ENCODE measurements at regions of chr15 and their contacts with region 1.

Region 1: DNA sequence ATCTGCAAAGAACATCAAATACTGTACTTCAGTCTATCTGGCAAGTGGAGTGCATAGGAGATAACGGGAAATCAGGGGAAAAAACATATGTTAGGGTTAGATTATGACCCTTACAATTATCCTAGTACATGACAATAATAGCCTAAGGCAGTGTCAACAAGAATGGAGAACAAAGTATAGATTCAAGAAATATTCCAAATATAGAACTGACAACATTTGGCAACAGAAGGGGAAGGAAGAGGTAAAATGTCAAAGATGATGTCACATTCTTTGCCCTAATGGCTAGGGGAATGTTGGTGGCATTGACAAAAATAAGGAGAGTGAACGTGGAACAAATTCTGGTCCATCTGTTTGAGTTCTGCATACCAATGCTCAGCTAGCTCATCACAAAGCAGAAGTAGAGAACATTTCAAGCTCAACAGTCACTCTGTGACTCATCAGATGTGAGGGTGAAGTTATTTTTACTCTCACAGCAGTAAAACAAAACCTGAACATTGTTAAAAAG is 15.5 kb upstream of the ATP8B4 start:
- DNase-seq: no peak
- H3K4me3 Mint-ChIP-seq: peak overlapping the region; percentile 1
- H3K27ac Mint-ChIP-seq: peak overlapping the region; percentile 92
- H3K4me1 Mint-ChIP-seq: peaks cover 52% of the 10 kb centered on the region
- H3K27me3 Mint-ChIP-seq: peaks cover 4% of the 10 kb centered on the region

Region 2: DNA sequence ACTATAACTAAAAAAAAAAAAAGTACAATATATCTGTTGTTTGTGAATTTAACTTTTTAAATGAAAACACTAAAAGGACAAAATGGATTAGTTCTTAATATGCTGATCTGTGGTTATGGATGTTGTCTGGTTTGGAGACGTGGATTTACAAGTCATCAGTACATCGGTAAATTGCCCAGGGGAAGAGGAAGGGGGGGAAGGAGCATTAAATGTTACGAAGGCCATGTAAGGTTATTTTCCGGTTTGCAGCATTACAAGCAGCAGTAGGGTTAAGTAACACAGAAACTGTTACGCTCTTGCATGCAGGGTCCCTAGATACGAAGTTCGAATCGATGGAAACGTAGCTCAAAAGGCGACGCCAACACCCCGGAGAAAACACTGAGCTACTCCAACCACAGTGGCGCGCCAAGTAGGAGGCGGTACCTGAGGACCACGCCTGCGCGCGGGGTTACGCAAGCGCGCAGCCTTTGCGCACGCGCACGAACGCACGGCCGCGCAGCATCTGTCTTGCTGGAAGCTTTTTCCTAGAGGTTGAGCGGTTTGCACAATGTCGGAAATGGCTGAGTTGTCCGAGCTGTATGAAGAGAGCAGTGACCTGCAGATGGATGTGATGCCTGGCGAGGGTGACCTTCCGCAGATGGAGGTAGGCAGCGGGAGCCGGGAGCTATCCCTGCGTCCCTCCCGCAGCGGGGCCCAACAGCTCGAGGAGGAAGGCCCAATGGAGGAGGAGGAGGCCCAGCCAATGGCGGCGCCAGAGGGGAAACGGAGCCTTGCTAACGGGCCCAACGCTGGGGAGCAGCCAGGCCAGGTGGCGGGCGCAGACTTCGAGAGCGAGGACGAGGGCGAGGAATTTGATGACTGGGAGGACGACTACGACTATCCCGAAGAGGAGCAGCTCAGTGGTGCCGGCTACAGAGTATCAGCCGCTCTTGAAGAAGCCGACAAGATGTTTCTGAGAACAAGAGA is 1256.7 kb before region 1 on chr15 and contains the start of gene EID1:
- CTCF ChIA-PET with region 1: no interaction called
- intact Hi-C with region 1: loop called (anchors 5 kb)
- DNase-seq: peak; percentile 93
- H3K4me3 Mint-ChIP-seq: peak within 1 kb of the TSS; percentile 92
- H3K27ac Mint-ChIP-seq: peak within 1 kb of the TSS; percentile 94
- H3K4me1 Mint-ChIP-seq: peaks cover 29% of the 10 kb centered on the region
- H3K27me3 Mint-ChIP-seq: peaks cover 6% of the 10 kb centered on the region
- total RNA-seq, gene EID1: 43.2 to 48.4 TPM

Region 3: GRCh38 chr15:49815950-49816349 is 318.6 kb before region 1 on chr15:
- CTCF ChIA-PET with region 1: no interaction called
- intact Hi-C with region 1: no loop called
- DNase-seq: no peak
- H3K4me3 Mint-ChIP-seq: no peak overlapping the region
- H3K27ac Mint-ChIP-seq: no peak overlapping the region
- H3K4me1 Mint-ChIP-seq: no peaks in the 10 kb centered on the region
- H3K27me3 Mint-ChIP-seq: peaks cover 11% of the 10 kb centered on the region

Region 4: GRCh38 chr15:49876401-49877038 is 258.1 kb before region 1 on chr15:
- CTCF ChIA-PET with region 1: no interaction called
- intact Hi-C with region 1: loop called (anchors 1 kb)
- DNase-seq: no peak
- H3K4me3 Mint-ChIP-seq: no peak overlapping the region
- H3K27ac Mint-ChIP-seq: no peak overlapping the region
- H3K4me1 Mint-ChIP-seq: no peaks in the 10 kb centered on the region
- H3K27me3 Mint-ChIP-seq: no peaks in the 10 kb centered on the region

Region 5: DNA sequence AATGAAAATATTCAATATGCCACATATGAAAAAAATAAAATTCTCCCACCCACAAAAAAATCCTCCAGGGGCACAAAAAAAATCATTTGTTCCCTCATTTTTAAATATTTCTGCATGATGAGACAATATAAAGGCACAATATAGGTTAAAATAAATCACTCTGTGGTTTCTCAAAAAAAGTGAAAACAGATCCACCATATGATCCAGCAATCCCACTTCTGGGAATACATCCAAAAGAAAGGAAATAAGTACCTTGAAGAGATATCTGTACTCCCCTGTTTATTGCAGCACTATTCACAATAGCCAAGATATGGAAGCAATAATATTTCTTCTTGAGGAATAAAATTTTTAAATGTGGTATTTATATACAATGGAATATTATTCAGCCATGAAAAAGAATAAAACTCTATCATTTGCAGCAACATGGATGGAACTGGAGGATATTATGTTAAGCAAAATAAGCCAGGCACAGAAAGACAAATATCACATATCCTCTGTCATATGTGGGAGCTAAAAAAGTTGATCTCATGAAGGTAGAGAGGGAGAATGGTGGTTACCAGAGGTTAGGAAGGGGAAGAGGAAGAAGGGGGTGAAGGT is 17.0 kb before region 1 on chr15:
- CTCF ChIA-PET with region 1: interaction called, 4 read pairs
- intact Hi-C with region 1: loop called (anchors 1 kb)
- DNase-seq: no peak
- H3K4me3 Mint-ChIP-seq: no peak overlapping the region
- H3K27ac Mint-ChIP-seq: no peak overlapping the region
- H3K4me1 Mint-ChIP-seq: peaks cover 10% of the 10 kb centered on the region
- H3K27me3 Mint-ChIP-seq: peaks cover 25% of the 10 kb centered on the region

Region 6: GRCh38 chr15:50260969-50261496 is 126.5 kb after region 1 on chr15:
- CTCF ChIA-PET with region 1: no interaction called
- intact Hi-C with region 1: loop called (anchors 1 kb)
- DNase-seq: no peak
- H3K4me3 Mint-ChIP-seq: peak overlapping the region; percentile 52
- H3K27ac Mint-ChIP-seq: peak overlapping the region; percentile 98
- H3K4me1 Mint-ChIP-seq: peaks cover 73% of the 10 kb centered on the region
- H3K27me3 Mint-ChIP-seq: no peaks in the 10 kb centered on the region

Region 7: GRCh38 chr15:50876989-50877360 is 742.4 kb after region 1 on chr15:
- CTCF ChIA-PET with region 1: no interaction called
- intact Hi-C with region 1: loop called (anchors 1 kb)
- DNase-seq: peak; percentile 85
- H3K4me3 Mint-ChIP-seq: peak overlapping the region; percentile 75
- H3K27ac Mint-ChIP-seq: peak overlapping the region; percentile 46
- H3K4me1 Mint-ChIP-seq: peaks cover 53% of the 10 kb centered on the region
- H3K27me3 Mint-ChIP-seq: peaks cover 4% of the 10 kb centered on the region